Prostate gland (tissue), 2 donors: ENCODE measurements at regions of chr10 and their contacts with region 1.

Region 1: DNA sequence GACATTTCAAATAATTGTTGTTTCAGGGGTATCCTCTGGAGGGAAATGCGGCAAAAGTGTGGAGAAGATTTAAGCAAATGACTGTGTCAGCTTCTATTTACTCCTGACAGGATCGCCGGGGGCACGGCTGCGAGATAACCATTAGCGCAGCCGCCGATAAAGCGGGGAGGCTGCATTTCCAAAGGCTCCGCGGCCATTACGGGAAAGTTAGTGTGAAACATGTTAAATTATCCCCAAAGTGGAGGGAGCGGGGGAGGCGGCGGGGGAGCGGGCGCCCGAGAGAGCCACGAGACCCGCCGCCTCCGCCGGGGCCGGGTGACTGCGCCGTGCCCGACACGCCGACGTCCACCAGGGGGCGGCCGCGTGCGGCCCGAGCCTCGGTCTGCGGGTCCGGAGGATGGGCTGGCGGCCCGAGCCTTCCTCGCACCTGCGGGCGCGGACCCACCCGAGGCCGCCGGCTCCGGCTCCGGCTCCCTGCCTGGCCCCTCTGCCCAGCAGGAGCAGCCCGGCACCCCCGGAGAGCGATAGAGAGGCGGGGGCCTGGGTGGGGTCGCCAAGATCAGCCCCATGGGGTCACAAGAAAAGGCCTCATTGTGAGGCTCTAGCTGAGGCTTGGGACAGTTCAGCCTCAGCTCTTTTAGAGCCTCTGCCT is 74.4 kb upstream of the PAX2 start:
- DNase-seq: no peak
- H3K4me3 ChIP-seq: no peak overlapping the region
- H3K27ac ChIP-seq: no peak overlapping the region
- H3K4me1 ChIP-seq: no peaks in the 10 kb centered on the region
- H3K27me3 ChIP-seq: peaks cover 41% of the 10 kb centered on the region
- CTCF ChIP-seq: peak; percentile 52 to 58 (median 55)
- POLR2A ChIP-seq: no peak

Region 2: DNA sequence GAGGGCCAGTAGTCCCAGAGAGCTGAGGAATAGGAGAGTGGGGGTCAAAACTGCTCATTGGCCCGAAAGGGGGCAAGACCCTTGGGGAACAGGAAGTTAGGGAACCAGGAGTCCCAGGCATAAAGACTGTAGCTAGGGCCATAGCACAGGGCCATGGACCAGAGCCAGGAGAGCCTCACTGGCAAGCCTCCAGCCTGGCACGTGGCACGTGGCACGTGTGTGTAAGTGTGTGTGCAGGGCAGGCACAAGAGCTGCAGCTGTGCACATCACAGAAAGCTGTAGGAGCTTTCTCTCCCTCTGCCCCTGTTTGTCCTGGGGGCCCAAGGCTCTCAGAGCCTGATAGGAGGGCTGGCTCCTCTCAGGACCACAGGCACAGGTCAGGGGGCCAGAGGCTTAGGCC is 194.0 kb after region 1 on chr10:
- intact Hi-C with region 1: loop called (anchors 10 kb)
- DNase-seq: no peak
- H3K4me3 ChIP-seq: no peak overlapping the region
- H3K27ac ChIP-seq: no peak overlapping the region
- H3K4me1 ChIP-seq: no peaks in the 10 kb centered on the region
- H3K27me3 ChIP-seq: no peaks in the 10 kb centered on the region
- CTCF ChIP-seq: no peak
- POLR2A ChIP-seq: no peak